ENCODE measurements at regions of chr5 and their contacts with region 1.

Region 1: DNA sequence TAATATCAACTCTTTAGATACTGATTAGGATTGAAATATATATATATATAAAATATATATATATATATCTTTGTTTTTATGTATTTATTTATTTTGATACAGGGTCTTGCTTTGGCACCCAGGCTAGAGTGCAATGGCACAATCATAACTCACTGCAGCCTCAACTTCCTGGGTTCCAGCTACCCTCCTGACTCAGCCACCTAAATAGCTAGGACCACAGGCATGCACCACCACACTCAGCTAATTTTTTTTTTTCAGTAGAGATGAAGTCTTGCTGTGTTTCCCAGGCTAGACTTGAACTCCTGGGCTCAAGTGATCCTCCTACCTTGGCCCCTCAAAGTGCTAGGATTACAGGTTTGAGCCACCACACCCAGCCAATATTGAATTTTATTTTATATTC is 20.6 kb upstream of the CDH6 start:
- DNase-seq: no peak
- ATAC-seq: no peak
- H3K4me3 Mint-ChIP-seq: no peak overlapping the region
- H3K27ac Mint-ChIP-seq: no peak overlapping the region
- H3K4me1 Mint-ChIP-seq: no peaks in the 10 kb centered on the region
- H3K27me3 Mint-ChIP-seq: no peaks in the 10 kb centered on the region
- CTCF ChIP-seq: no peak

Region 2: DNA sequence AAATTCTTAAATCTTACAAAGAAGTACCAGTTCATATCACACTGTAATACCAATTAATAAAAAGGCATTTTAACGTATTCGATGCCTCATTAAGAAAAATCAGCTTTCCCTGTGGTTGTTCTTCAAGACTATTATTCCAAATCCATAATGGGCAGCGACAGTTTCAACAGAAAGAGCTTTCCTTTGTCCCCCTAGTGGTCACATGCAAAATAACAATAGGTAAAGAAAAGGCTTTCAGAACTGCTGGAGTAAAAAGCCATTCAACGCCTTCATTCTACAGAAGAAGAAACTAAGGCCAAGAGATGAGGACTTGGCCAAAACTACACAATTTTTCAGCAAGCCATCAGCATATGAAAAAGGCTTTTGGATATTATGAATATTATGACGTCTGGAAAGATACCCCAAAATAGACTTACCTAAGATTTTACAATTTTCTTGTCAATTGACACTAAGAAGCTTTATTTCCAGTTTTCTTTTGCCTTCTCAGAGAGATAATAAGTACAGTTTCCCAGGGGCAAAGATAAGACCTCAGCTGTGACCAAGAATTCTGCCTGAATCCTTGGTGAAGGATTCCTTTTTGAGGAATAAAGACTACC is 13.9 kb after region 1 on chr5:
- CTCF ChIA-PET with region 1: interaction called, 11 read pairs
- POLR2A ChIA-PET with region 1: no interaction called
- intact Hi-C with region 1: no loop called
- DNase-seq: no peak
- ATAC-seq: no peak
- H3K4me3 Mint-ChIP-seq: no peak overlapping the region
- H3K27ac Mint-ChIP-seq: no peak overlapping the region
- H3K4me1 Mint-ChIP-seq: no peaks in the 10 kb centered on the region
- H3K27me3 Mint-ChIP-seq: peaks cover 2% of the 10 kb centered on the region
- CTCF ChIP-seq: peak; percentile 72

Region 3: DNA sequence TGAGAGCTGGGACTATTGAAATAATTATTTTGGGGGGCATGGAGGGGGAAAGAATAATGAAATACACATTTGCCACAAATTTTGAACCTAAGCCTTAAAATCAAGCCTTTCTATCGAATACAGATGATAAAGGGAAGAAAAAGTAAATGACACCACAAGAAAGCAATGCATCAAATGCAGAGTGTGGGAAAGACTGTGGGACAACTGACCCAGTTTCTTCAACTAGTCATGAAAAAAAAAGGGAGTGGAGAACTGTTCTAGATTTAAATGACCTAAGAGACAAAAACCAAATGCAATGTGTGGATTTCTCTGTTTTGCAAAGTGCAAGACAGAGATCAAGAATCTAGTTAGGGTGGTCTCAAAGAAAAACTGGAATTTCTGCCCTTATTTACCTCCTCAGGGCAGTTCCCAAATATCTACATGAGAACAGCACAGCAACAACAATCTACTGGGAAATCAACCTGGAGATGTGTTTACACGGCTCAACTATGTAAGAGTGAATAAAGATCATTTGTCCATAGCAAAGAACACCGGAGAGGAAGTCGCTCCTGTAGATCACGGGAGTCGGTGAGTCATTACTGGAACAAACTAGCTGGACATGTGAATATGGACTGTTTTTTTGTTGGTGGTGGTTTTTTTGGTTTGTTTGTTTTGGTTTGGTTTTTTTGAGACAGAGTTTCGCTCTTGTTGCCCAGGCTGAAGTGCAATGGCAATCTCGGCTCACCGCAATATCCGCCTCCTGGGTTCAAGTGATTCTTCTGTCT is 213.1 kb after region 1 on chr5:
- CTCF ChIA-PET with region 1: no interaction called
- POLR2A ChIA-PET with region 1: no interaction called
- intact Hi-C with region 1: no loop called
- DNase-seq: no peak
- ATAC-seq: no peak
- H3K4me3 Mint-ChIP-seq: no peak overlapping the region
- H3K27ac Mint-ChIP-seq: no peak overlapping the region
- H3K4me1 Mint-ChIP-seq: no peaks in the 10 kb centered on the region
- H3K27me3 Mint-ChIP-seq: peaks cover 13% of the 10 kb centered on the region
- CTCF ChIP-seq: no peak

Measured in activated CD8-positive, alpha-beta T cell treated with anti-CD3 and anti-CD28 coated beads for 36 hours (primary cell).